Activated CD8-positive, alpha-beta T cell treated with anti-CD3 and anti-CD28 coated beads for 36 hours (primary cell): ENCODE measurements at regions of chr12 and their contacts with region 1.

Region 1: GRCh38 chr12:132600048-132601032 is 10.0 kb downstream of the LRCOL1 start:
- DNase-seq: peak; percentile 68
- ATAC-seq: peak; percentile 60
- H3K4me3 Mint-ChIP-seq: peak overlapping the region; percentile 61
- H3K27ac Mint-ChIP-seq: no peak overlapping the region
- H3K4me1 Mint-ChIP-seq: peaks cover 15% of the 10 kb centered on the region
- H3K27me3 Mint-ChIP-seq: peaks cover 39% of the 10 kb centered on the region
- CTCF ChIP-seq: peak; percentile 43

Region 2: DNA sequence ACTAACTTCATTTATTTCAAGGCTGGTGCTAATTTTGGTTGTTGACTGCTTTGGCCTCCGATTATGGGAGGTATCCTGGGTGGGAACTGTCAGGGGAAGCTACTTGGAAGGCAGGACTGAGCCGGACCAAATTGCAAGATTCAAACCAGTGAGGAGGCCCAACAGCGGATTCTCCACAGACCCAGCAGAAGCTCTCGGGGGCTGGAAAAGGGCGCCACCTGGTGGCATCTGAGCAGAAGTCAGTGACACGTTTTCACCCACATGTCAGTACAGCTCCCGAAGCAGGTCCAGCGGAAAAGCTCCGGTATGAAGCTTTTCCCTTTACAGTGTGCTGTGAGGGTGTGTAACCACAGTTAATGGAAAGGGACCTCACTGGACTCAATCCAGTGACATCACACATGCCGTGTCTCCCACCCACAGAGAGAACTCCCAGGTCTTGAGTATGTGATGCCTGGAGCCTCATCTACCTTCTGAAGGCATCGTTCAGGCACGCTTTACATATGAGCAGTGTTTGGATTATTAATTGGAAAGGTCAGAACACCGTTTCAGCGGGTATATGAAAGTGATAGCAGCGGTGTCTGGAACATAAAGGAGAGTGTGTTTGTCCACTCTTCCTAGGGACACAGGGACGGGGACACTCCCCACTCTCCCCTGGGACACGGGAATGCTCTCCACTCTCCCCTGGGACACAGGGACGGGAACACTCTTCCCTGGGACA is 14.7 kb after region 1 on chr12:
- CTCF ChIA-PET with region 1: interaction called, 23 read pairs
- POLR2A ChIA-PET with region 1: no interaction called
- intact Hi-C with region 1: no loop called
- DNase-seq: peak; percentile 86
- ATAC-seq: peak; percentile 93
- H3K4me3 Mint-ChIP-seq: no peak overlapping the region
- H3K27ac Mint-ChIP-seq: no peak overlapping the region
- H3K4me1 Mint-ChIP-seq: peaks cover 7% of the 10 kb centered on the region
- H3K27me3 Mint-ChIP-seq: peaks cover 45% of the 10 kb centered on the region
- CTCF ChIP-seq: peak; percentile 95